HEK293 (cell line): ENCODE measurements at regions of chr17 and their contacts with region 1.

Region 1: DNA sequence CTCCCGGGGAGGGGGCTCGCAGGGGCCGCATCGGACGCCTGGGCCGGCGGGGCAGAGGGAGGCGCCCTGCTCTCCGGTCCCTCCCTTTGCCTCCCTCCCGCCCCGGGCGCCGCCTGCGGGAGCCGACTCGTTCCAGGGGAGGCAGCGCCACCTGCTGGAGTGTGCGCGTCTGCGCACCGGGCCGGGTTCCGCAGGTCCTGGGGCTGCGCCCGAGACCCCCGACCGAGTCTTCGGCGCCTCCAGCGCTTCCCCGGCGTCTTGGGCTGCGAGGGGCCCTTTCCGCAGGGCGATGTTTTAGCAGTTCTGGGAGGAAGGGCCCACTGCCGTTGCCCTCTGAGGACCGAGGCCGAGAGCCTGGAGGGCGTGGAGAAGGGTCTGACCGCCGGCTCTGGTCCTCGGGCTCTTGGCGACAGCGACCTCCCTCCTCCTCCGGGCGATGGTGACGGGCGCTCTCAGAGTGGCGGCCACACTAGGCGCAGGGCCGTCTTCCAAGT is 106.3 kb downstream of the SEC14L1 start:
- H3K4me3 ChIP-seq: peak overlapping the region; percentile 30
- H3K27ac ChIP-seq: no peak overlapping the region; the same call in 1 of the 2 replicates
- H3K4me1 ChIP-seq: 0 out of 2 replicates have a peak, but pooled peaks cover 2% of the 10 kb centered on the region
- CTCF ChIP-seq: peak; percentile 97

Region 2: DNA sequence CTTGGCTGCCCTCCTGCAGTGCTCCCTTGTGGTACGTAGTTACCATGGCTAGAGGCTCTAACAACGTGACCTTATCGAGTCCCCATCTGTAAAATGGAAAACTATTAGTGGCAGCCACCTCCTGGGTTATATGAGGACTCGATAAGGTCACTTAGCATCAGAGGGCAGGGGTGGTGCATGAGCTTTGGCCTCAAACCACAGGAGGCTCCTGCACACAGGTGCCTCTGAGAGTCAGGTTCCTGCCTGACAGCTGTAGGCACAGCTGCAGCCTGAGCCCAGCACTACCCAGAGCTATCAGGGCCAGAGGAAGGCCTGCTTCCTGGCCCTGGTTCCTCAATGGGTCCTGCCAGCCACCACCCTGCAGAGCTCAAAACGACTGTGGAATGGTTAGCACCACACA is 163.6 kb before region 1 on chr17:
- CTCF ChIA-PET with region 1: interaction called, 26 read pairs
- POLR2A ChIA-PET with region 1: interaction called, 3 read pairs
- H3K4me3 ChIP-seq: no peak overlapping the region
- H3K27ac ChIP-seq: no peak overlapping the region
- H3K4me1 ChIP-seq: no peaks in the 10 kb centered on the region; the same call in 1 of the 2 replicates
- CTCF ChIP-seq: no peak